PC-9 (cell line): ENCODE measurements at regions of chr16 and their contacts with region 1.

Region 1: DNA sequence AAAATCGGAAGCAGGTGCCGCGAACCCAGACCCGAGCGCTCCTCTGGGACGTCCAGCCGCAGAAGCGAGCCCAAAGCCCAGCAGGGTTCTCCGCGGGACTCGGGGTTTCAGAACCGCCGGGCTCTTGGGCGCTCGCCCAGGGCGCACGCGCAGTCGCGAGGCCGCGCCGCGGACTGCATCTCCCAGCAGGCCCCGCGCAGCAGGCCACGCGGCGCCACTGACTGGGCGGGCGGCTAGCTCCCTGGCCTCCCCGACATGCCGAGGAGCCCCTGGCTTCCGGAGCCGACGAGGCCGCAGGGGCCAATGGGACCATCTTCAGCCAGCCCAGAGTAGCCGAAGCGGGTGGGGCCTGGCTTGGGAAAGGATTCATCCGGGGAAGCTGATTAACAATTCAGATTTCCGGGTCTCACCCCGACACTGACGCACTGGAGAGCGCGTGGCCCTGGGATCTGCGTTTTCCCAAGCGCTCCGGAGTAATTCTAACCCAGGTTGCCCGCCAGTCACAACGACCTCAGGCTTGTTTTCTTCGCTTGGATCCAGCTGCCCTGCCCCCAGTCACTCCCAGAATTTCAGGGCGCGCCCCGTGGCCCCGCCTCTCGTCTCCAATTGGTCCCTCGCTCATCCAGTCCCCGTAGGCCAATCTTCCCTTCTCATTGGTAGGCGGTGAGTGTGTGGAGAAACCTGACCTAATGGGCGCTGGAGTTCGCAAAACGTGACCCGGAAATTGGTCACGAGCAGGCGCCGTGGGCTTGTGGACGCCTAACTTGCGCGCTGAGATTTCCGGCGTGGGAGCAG is at the start of gene ZNF263:
- DNase-seq: peak; percentile 93 to 97
- H3K4me3 ChIP-seq: peak within 1 kb of the TSS; percentile 63
- H3K27ac ChIP-seq: peak within 1 kb of the TSS; percentile 97
- H3K4me1 ChIP-seq: peaks cover 18% of the 10 kb centered on the region
- H3K27me3 ChIP-seq: no peaks in the 10 kb centered on the region
- CTCF ChIP-seq: no peak
- total RNA-seq, gene ZNF263: 36.8 and 49.8 TPM in 2 replicates

Region 2: DNA sequence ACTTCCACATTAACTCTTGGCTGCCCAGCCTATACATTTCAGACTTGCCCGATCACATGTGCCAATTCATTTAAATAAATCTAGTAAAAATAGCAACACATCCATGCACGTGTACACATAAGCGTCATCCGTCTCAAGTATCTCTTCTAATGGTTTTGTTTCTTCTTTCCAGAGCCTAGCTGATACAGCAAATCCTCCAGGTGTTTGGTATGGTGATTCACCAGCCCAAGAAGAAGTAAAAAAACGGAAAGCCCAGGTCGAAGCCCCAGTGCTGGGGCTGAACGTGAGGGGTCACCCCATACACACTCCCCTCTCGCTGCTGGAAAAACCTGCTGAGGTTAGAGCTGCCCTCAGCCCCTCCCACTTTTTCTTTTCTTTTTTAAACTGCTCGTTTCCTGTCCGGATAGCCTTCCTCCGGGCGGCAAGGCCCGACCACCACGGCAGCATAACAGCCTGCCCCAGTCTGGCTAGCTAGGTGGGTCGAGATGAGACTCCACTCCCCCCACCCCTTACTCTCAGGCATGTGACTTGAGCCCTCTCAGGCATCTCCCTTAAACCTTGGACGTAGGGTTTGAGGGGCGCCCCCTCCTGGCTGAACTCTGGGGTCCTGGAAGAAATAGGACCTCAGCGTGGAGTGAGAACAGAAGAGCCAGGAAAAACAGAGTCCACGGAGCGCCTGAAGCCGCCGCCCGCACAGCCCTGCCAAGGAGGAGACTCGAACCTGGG is 108.9 kb before region 1 on chr16:
- CTCF ChIA-PET with region 1: interaction called, 11 read pairs
- POLR2A ChIA-PET with region 1: no interaction called
- intact Hi-C with region 1: no loop called
- DNase-seq: no peak
- H3K4me3 ChIP-seq: peak overlapping the region; percentile 43; the same call in 1 of the 2 replicates
- H3K27ac ChIP-seq: no peak overlapping the region
- H3K4me1 ChIP-seq: peaks cover 7% of the 10 kb centered on the region
- H3K27me3 ChIP-seq: no peaks in the 10 kb centered on the region
- CTCF ChIP-seq: peak; percentile 68

Region 3: GRCh38 chr16:3214904-3215600 is 67.9 kb before region 1 on chr16:
- CTCF ChIA-PET with region 1: no interaction called
- POLR2A ChIA-PET with region 1: no interaction called
- intact Hi-C with region 1: no loop called
- DNase-seq: no peak
- H3K4me3 ChIP-seq: no peak overlapping the region
- H3K27ac ChIP-seq: no peak overlapping the region
- H3K4me1 ChIP-seq: no peaks in the 10 kb centered on the region
- H3K27me3 ChIP-seq: peaks cover 41% of the 10 kb centered on the region
- CTCF ChIP-seq: no peak

Region 4: DNA sequence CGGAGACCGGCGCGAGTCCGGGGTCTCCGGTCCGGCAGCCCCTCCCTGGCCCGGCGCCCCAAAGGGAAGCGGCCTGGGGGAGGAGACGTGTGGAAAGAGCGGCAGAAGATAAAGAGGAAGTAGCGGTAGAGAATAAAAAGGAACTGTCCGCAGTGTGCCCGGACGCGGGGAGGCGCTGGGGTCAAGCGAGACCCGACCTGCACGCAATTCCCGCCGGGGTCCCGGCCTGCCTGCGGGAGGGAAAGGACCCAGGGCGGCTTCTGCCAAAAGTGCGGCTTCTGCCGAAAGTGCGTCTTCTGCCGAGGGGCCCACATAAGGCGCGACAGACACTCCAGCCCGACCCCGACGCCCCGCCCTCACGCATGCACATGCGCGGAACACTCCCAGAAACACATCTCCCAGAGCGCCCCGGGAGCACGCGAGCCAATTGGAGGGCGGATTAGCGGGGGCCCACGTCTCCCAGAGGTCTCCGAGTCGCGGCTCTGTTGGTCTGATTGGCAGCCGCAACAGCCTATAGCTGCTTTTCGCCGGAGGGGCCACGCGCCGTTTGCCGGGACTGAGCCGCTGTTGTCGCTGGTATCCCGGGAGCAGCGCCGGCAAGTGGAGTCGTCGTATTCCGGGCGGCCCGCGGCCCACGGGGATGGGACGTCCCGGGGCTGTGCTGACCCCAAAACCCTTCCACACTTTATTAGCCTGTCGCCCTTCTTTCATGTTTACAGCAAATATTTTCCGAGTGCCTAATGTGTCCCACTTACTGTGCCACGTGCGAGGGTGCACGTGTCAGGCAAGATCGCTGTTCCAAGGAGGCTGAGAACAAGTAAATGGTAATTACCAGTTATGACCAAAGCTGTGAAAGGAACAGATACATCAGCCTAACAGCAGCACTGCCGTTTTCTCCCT is 18.5 kb before region 1 on chr16:
- CTCF ChIA-PET with region 1: no interaction called
- POLR2A ChIA-PET with region 1: interaction called, 4 read pairs
- intact Hi-C with region 1: loop called (anchors 1 kb)
- DNase-seq: peak; percentile 95 to 99
- H3K4me3 ChIP-seq: peak overlapping the region; percentile 84
- H3K27ac ChIP-seq: peak overlapping the region; percentile 75
- H3K4me1 ChIP-seq: no peaks in the 10 kb centered on the region; the same call in 1 of the 2 replicates
- H3K27me3 ChIP-seq: no peaks in the 10 kb centered on the region
- CTCF ChIP-seq: no peak

Region 5: GRCh38 chr16:3503523-3503922 is 220.6 kb after region 1 on chr16:
- CTCF ChIA-PET with region 1: no interaction called
- POLR2A ChIA-PET with region 1: no interaction called
- intact Hi-C with region 1: loop called (anchors 2 kb)
- DNase-seq: peak; percentile 54 to 82
- H3K4me3 ChIP-seq: no peak overlapping the region
- H3K27ac ChIP-seq: peak overlapping the region; percentile 22; the same call in 1 of the 2 replicates
- H3K4me1 ChIP-seq: peaks cover 20% of the 10 kb centered on the region
- H3K27me3 ChIP-seq: no peaks in the 10 kb centered on the region
- CTCF ChIP-seq: no peak

Region 6: DNA sequence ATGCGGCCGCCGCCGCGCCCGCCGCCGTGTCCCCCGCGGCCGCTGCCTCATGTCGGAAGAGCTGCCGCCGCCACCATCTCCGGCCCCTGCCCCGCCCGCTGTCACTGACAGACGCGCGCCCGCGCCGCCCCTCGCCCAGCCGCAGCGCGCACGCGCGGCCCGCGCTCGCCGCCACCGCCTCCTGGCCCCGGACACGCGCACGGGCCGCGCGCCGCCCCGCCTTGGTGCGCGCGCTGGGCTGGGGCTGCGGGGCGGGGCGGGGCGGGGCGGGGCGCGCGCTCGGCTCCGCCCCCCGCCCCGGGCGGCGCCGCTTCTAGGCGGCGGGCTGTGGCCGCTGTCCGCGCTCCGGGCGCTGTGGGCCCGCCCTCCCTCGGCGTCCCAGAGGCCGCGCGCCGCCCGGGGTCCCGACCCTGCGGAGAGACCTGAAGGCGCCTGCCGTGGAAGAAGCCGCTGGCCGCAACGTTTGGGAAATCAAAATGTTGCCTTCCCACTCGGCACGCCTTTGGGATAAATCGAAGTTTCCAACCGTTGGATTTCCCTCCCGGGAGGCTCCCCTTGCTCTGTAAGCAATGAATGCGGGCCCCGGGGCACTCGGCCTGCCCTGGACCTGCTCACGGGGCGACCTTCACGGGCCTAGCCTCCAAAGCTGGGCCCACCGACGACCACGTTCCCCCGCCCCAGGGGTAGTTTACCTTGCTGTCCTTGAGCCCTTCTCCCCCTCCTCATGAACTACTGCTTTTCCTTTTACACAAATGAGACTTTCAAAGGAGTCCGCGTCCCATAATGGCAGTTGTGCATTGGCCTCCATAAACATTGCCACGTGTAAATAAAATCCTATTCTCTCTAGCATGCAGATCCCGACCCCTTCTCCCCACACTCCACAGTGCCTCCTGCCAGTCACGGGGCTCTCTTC is 833.7 kb after region 1 on chr16 and contains the start of gene ADCY9:
- CTCF ChIA-PET with region 1: no interaction called
- POLR2A ChIA-PET with region 1: interaction called, 10 read pairs
- intact Hi-C with region 1: no loop called
- DNase-seq: peak in 1 of 2 experiments; percentile 82
- H3K4me3 ChIP-seq: peak within 1 kb of the TSS; percentile 56; the same call in 1 of the 2 replicates
- H3K27ac ChIP-seq: no peak within 1 kb of the TSS
- H3K4me1 ChIP-seq: no peaks in the 10 kb centered on the region
- H3K27me3 ChIP-seq: no peaks in the 10 kb centered on the region
- CTCF ChIP-seq: no peak
- total RNA-seq, gene ADCY9: 9.8 and 10.5 TPM in 2 replicates